Caco-2 (cell line): ENCODE measurements at regions of chr17 and their contacts with region 1.

Region 1: GRCh38 chr17:69567130-69567529 is 152.6 kb downstream of the MAP2K6 start:
- DNase-seq: peak in 1 of 2 experiments; percentile 13
- H3K4me3 ChIP-seq: no peak overlapping the region
- H3K4me3 Mint-ChIP-seq: no peak overlapping the region
- H3K27ac Mint-ChIP-seq: no peak overlapping the region
- H3K4me1 ChIP-seq: no peaks in the 10 kb centered on the region
- H3K4me1 Mint-ChIP-seq: no peaks in the 10 kb centered on the region
- H3K27me3 ChIP-seq: no peaks in the 10 kb centered on the region
- H3K27me3 Mint-ChIP-seq: peaks cover 8% of the 10 kb centered on the region
- CTCF ChIP-seq: no peak

Region 2: DNA sequence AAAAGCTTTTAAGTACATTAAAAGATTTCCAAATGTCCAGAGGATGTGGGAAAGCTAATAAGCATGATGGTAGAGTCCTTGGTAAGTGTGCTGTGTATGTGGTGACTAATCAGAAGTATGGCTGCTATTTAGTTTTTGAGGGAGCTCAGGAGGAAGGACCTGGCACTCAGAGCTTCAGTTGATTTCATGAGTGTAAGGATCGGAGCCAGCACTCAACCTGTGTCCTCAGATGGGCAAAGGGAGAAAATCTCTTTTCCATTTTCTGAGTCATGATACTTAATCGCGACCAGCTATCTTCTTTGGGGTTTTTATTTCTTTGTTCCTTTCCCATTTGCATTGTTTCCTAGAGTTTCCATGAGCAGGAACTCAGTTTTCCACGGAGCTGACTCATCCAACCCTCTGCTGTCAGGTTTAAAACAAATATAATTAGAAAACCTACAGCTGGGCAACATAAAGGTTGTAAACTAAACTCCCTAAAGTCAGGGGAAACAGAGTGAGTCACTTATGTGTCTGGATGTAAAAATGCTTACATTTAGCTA is 27.3 kb before region 1 on chr17:
- CTCF ChIA-PET with region 1: no interaction called
- POLR2A ChIA-PET with region 1: no interaction called
- intact Hi-C with region 1: no loop called
- DNase-seq: no peak
- H3K4me3 ChIP-seq: no peak overlapping the region
- H3K4me3 Mint-ChIP-seq: no peak overlapping the region
- H3K27ac Mint-ChIP-seq: peak overlapping the region; percentile 9
- H3K4me1 ChIP-seq: no peaks in the 10 kb centered on the region; the same call in 1 of the 2 replicates
- H3K4me1 Mint-ChIP-seq: peaks cover 4% of the 10 kb centered on the region
- H3K27me3 ChIP-seq: no peaks in the 10 kb centered on the region
- H3K27me3 Mint-ChIP-seq: no peaks in the 10 kb centered on the region
- CTCF ChIP-seq: no peak

Region 3: GRCh38 chr17:69729937-69730336 is 162.8 kb after region 1 on chr17:
- CTCF ChIA-PET with region 1: no interaction called
- POLR2A ChIA-PET with region 1: no interaction called
- intact Hi-C with region 1: loop called (anchors 5 kb)
- DNase-seq: no peak
- H3K4me3 ChIP-seq: no peak overlapping the region
- H3K4me3 Mint-ChIP-seq: no peak overlapping the region
- H3K27ac Mint-ChIP-seq: no peak overlapping the region
- H3K4me1 ChIP-seq: no peaks in the 10 kb centered on the region
- H3K4me1 Mint-ChIP-seq: no peaks in the 10 kb centered on the region
- H3K27me3 ChIP-seq: no peaks in the 10 kb centered on the region
- H3K27me3 Mint-ChIP-seq: no peaks in the 10 kb centered on the region
- CTCF ChIP-seq: no peak

Region 4: GRCh38 chr17:70552230-70552981 is 985.3 kb after region 1 on chr17:
- CTCF ChIA-PET with region 1: no interaction called
- POLR2A ChIA-PET with region 1: no interaction called
- intact Hi-C with region 1: loop called (anchors 5 kb)
- DNase-seq: peak in 1 of 2 experiments; percentile 45
- H3K4me3 ChIP-seq: no peak overlapping the region
- H3K4me3 Mint-ChIP-seq: no peak overlapping the region
- H3K27ac Mint-ChIP-seq: no peak overlapping the region
- H3K4me1 ChIP-seq: no peaks in the 10 kb centered on the region
- H3K4me1 Mint-ChIP-seq: peaks cover 6% of the 10 kb centered on the region
- H3K27me3 ChIP-seq: no peaks in the 10 kb centered on the region
- H3K27me3 Mint-ChIP-seq: no peaks in the 10 kb centered on the region
- CTCF ChIP-seq: peak; percentile 47 to 70